ENCODE measurements at regions of chr9 and their contacts with region 1.

Region 1: GRCh38 chr9:75001719-75002422 is 26.2 kb downstream of the CARNMT1 start:
- DNase-seq: peak; percentile 14 to 63
- H3K4me3 ChIP-seq: no peak overlapping the region
- H3K27ac ChIP-seq: no peak overlapping the region
- H3K4me1 ChIP-seq: no peaks in the 10 kb centered on the region
- H3K27me3 ChIP-seq: no peaks in the 10 kb centered on the region
- CTCF ChIP-seq: peak; percentile 87

Region 2: GRCh38 chr9:74983709-74984108 is 18.2 kb before region 1 on chr9:
- CTCF ChIA-PET with region 1: no interaction called
- POLR2A ChIA-PET with region 1: no interaction called
- intact Hi-C with region 1: loop called (anchors 1 kb)
- DNase-seq: no peak
- H3K4me3 ChIP-seq: no peak overlapping the region
- H3K27ac ChIP-seq: no peak overlapping the region
- H3K4me1 ChIP-seq: no peaks in the 10 kb centered on the region
- H3K27me3 ChIP-seq: no peaks in the 10 kb centered on the region
- CTCF ChIP-seq: no peak

Region 3: DNA sequence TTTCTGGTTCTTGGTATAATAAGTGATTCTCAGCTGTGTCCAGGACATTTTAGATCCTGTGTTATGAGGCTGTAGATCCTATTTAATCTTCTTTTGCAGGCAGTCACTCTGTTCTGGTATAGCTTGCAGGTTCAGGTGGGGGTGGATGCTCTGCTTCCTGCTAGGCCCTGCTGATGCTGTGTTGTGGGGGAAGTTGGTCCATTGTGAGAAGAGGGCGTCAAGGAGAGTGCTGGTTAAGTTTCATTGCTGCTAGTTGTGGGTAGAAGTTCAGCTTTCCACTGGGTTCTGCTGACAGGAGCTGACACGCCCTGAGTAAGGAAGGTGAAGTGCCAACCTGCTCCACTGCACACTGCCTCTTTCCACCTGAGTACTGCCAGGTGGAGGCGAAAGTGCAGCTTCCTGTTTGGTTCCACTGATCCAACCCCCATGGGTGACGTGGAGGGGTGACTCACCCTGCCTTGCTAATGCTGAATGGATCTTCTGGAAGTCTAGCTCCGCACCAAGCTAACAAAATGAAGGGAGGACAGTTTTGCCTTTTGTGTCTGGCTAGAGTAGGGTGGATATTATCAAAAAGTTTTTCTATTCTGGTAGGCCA is 69.8 kb after region 1 on chr9:
- CTCF ChIA-PET with region 1: no interaction called
- POLR2A ChIA-PET with region 1: no interaction called
- intact Hi-C with region 1: loop called (anchors 5 kb)
- DNase-seq: peak in 1 of 2 experiments; percentile 25
- H3K4me3 ChIP-seq: no peak overlapping the region
- H3K27ac ChIP-seq: no peak overlapping the region
- H3K4me1 ChIP-seq: no peaks in the 10 kb centered on the region; the same call in 1 of the 2 replicates
- H3K27me3 ChIP-seq: no peaks in the 10 kb centered on the region
- CTCF ChIP-seq: no peak